ENCODE measurements at regions of chr17 and their contacts with region 1.

Region 1: GRCh38 chr17:40098846-40099618 is 1.4 kb downstream of the NR1D1 start:
- DNase-seq: peak; percentile 95
- ATAC-seq: peak; percentile 64
- H3K4me3 Mint-ChIP-seq: peak overlapping the region; percentile 91
- H3K27ac Mint-ChIP-seq: peak overlapping the region; percentile 90
- H3K4me1 Mint-ChIP-seq: peaks cover 70% of the 10 kb centered on the region
- H3K27me3 Mint-ChIP-seq: no peaks in the 10 kb centered on the region
- CTCF ChIP-seq: no peak

Region 2: GRCh38 chr17:39461113-39461925 is 637.7 kb before region 1 on chr17 and contains the start of gene CDK12:
- CTCF ChIA-PET with region 1: no interaction called
- POLR2A ChIA-PET with region 1: no interaction called
- intact Hi-C with region 1: loop called (anchors 1 kb)
- DNase-seq: peak; percentile 87
- ATAC-seq: peak; percentile 87
- H3K4me3 Mint-ChIP-seq: peak within 1 kb of the TSS; percentile 97
- H3K27ac Mint-ChIP-seq: peak within 1 kb of the TSS; percentile 98
- H3K4me1 Mint-ChIP-seq: peaks cover 50% of the 10 kb centered on the region
- H3K27me3 Mint-ChIP-seq: no peaks in the 10 kb centered on the region
- CTCF ChIP-seq: no peak
- total RNA-seq, gene CDK12: 100 and 118 TPM in 2 replicates

Region 3: DNA sequence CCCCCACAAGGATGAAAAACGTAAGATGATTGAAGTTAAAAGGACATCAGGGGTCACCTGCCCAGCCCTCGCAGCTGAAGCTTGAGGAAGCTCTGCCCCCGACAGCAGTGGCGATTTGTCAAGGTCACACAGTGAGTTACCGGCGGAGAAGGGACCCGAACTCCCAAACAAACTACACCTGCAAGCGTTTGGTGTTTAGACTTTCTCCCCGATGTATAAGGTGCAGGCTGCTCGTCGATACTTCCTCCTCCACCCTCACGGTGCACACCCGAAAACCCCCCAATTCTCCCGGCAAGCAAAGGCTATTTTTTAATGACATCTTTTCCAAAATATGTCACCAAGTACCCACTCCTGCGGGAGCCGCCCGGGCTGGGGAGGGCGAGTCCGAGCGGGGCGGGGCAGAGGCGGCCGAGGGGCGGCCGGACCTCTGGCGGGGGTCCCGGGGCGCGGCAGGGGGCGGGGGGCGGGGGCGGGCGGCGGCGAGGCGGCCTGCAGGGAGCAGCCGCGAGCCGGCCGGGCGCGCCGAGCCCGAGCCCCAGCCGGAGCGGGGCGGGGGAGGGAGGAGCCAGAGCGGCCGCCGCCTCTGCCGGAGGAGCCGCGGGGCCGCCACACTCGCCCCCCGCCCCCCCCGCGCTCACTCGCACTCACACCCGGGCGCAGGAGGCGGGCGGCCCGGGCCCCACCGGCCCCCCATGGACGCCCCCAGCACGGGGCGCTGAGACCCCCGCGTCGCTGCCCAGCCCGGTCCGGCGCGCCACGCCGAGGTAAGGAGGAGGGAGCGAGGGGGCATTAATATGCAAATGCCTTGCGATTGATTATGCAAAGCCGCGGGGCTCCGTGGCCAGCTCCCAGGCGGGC is 36.5 kb before region 1 on chr17 and contains the start of gene THRA:
- CTCF ChIA-PET with region 1: no interaction called
- POLR2A ChIA-PET with region 1: interaction called, 13 read pairs
- intact Hi-C with region 1: no loop called
- DNase-seq: peak; percentile 79
- ATAC-seq: peak; percentile 93
- H3K4me3 Mint-ChIP-seq: peak within 1 kb of the TSS; percentile 87
- H3K27ac Mint-ChIP-seq: peak within 1 kb of the TSS; percentile 78
- H3K4me1 Mint-ChIP-seq: peaks cover 39% of the 10 kb centered on the region
- H3K27me3 Mint-ChIP-seq: peaks cover under 1% of the 10 kb centered on the region
- CTCF ChIP-seq: no peak
- total RNA-seq, gene THRA: 5.4 and 5.9 TPM in 2 replicates

Region 4: GRCh38 chr17:40086150-40087044 is 12.6 kb before region 1 on chr17:
- CTCF ChIA-PET with region 1: interaction called, 15 read pairs
- POLR2A ChIA-PET with region 1: interaction called, 5 read pairs
- intact Hi-C with region 1: loop called (anchors 1 kb)
- DNase-seq: peak; percentile 63
- ATAC-seq: peak; percentile 75
- H3K4me3 Mint-ChIP-seq: no peak overlapping the region
- H3K27ac Mint-ChIP-seq: no peak overlapping the region
- H3K4me1 Mint-ChIP-seq: peaks cover 6% of the 10 kb centered on the region
- H3K27me3 Mint-ChIP-seq: no peaks in the 10 kb centered on the region
- CTCF ChIP-seq: peak; percentile 26

Region 5: GRCh38 chr17:40121181-40122135 is 22.4 kb after region 1 on chr17 and contains the start of gene MSL1:
- CTCF ChIA-PET with region 1: no interaction called
- POLR2A ChIA-PET with region 1: interaction called, 14 read pairs
- intact Hi-C with region 1: no loop called
- DNase-seq: peak; percentile 84
- ATAC-seq: peak; percentile 68
- H3K4me3 Mint-ChIP-seq: peak within 1 kb of the TSS; percentile 82
- H3K27ac Mint-ChIP-seq: peak within 1 kb of the TSS; percentile 50
- H3K4me1 Mint-ChIP-seq: peaks cover 39% of the 10 kb centered on the region
- H3K27me3 Mint-ChIP-seq: no peaks in the 10 kb centered on the region
- CTCF ChIP-seq: no peak
- total RNA-seq, gene MSL1: 84.5 and 101 TPM in 2 replicates

Region 6: DNA sequence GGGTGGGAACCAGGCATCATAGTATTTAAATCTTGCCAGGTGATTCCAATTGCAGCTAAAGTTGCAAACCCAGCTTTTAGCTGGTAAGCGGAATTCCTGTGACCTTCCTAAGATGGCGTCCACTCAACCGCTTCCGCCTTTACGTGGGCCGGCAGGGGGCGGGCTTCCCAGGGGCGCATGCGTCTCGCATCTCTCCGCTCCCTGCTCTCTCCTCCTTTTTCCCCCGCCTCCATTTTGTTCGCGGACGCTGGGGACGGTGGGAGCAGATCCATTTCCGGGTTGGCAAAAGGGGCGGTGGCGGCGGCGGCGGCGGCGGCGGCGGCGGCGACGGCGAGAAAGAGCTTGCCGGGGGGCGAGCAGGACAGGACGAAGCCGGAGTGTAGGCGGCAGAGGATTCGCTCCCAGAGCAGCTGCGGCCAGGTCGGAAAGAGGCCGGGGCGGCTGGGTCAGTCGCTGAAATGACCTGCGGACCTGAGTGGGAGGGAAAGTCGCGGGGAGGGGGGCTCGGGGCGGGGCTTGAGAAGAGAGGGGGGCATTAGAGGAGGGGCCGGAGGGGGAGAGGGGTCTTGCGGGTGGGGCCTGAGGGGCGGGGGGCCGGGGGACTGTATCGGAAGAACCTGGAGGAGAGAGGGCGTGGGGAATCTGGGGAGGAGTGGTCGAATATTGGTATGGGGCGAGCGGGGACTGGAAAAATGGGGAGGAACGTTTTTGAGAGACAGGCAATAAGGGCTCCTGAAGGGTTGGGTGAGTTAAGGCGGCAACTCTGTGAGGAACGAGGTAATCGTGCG is 120.2 kb after region 1 on chr17 and contains the start of gene WIPF2:
- CTCF ChIA-PET with region 1: no interaction called
- POLR2A ChIA-PET with region 1: interaction called, 12 read pairs
- intact Hi-C with region 1: loop called (anchors 1 kb)
- DNase-seq: peak; percentile 92
- ATAC-seq: peak; percentile 88
- H3K4me3 Mint-ChIP-seq: peak within 1 kb of the TSS; percentile 97
- H3K27ac Mint-ChIP-seq: peak within 1 kb of the TSS; percentile 100
- H3K4me1 Mint-ChIP-seq: peaks cover 30% of the 10 kb centered on the region
- H3K27me3 Mint-ChIP-seq: no peaks in the 10 kb centered on the region
- CTCF ChIP-seq: no peak
- total RNA-seq, gene WIPF2: 28.4 and 32.9 TPM in 2 replicates

Region 7: DNA sequence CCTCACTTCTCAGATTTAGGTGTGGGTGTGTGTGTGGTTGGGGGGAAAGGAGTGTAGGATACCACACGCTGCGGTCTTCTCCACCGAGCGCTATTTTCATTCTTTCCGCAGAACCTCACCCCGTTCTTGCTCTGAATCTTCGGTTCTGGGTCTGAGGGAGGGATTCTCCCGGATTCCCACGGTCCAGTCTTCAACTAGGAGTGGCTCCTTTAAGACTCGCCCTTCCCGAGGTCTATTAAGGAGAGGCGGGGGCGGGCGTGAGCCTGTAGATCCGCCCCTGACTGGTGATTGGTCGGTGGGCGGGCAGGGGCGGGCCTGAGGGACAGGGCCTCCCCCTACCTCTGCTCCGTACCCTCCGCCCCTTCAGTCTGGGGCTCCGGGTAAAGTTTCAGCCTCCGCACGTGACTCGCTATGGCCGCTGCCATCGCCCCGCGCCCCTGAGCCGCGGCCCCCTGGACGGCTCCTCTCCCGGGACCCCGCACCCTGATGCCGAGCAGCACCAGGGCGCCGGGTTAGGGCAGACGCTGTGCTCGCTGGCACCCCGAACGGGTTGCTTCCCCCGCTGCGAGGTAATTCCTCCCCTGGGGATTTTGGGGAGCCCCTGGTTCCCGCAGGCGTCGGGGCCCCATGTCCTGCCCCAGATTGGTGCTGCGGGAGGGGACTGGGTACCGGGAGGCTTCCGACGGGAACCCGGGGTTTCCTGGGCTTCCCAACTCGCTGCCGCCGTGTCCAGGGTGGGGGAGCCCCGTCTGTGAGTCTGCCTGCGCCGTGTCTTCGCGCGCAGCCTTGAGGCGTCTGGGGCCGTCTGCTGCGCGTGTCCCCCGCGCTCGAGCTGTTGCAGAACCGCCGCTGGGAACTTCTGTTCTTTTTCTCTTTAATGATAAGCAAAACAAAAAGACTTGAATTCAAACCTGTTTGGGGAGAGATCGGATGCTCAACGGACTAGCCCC is 219.1 kb after region 1 on chr17:
- CTCF ChIA-PET with region 1: no interaction called
- POLR2A ChIA-PET with region 1: interaction called, 6 read pairs
- intact Hi-C with region 1: loop called (anchors 2 kb)
- DNase-seq: peak; percentile 88
- ATAC-seq: peak; percentile 65
- H3K4me3 Mint-ChIP-seq: peak overlapping the region; percentile 93
- H3K27ac Mint-ChIP-seq: peak overlapping the region; percentile 98
- H3K4me1 Mint-ChIP-seq: peaks cover 85% of the 10 kb centered on the region
- H3K27me3 Mint-ChIP-seq: no peaks in the 10 kb centered on the region
- CTCF ChIP-seq: no peak